Caco-2 (cell line): ENCODE measurements at regions of chr16 and their contacts with region 1.

Region 1: GRCh38 chr16:74774203-74775116 is at the start of gene FA2H:
- DNase-seq: peak; percentile 97 to 100
- H3K4me3 ChIP-seq: peak within 1 kb of the TSS; percentile 82
- H3K4me3 Mint-ChIP-seq: peak within 1 kb of the TSS; percentile 98
- H3K27ac Mint-ChIP-seq: peak within 1 kb of the TSS; percentile 84
- H3K4me1 ChIP-seq: peaks cover 7% of the 10 kb centered on the region; the same call in 1 of the 2 replicates
- H3K4me1 Mint-ChIP-seq: peaks cover 18% of the 10 kb centered on the region
- H3K27me3 ChIP-seq: no peaks in the 10 kb centered on the region
- H3K27me3 Mint-ChIP-seq: no peaks in the 10 kb centered on the region
- CTCF ChIP-seq: peak; percentile 38 to 65
- total RNA-seq, gene FA2H: 20.1 and 21.3 TPM in 2 replicates

Region 2: GRCh38 chr16:74695450-74696422 is 78.7 kb before region 1 on chr16:
- CTCF ChIA-PET with region 1: interaction called, 11 read pairs
- POLR2A ChIA-PET with region 1: no interaction called
- intact Hi-C with region 1: no loop called
- DNase-seq: peak; percentile 89 to 92
- H3K4me3 ChIP-seq: peak overlapping the region; percentile 36
- H3K4me3 Mint-ChIP-seq: peak overlapping the region; percentile 93
- H3K27ac Mint-ChIP-seq: peak overlapping the region; percentile 60
- H3K4me1 ChIP-seq: no peaks in the 10 kb centered on the region
- H3K4me1 Mint-ChIP-seq: peaks cover 15% of the 10 kb centered on the region
- H3K27me3 ChIP-seq: no peaks in the 10 kb centered on the region
- H3K27me3 Mint-ChIP-seq: no peaks in the 10 kb centered on the region
- CTCF ChIP-seq: no peak

Region 3: DNA sequence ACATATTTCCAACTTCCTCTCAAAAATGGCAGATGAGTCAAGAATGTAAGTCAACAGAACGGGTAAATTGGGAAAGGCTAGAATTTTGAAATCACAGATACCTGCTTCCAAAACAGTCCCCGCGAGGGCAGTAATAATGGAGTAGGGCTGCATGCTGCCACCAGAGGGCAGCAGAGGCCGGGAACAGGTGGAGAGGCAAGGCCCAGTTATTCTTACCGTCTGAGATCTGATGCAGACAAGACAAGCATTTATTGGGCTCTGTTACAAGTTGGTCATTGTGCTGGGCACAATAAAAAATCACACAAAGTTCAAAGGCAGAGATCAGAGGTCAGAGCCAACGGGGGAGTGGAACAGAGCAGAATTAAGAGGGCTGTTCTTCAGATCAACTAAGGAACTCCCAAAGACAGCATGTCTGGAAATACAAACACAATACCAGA is 65.0 kb before region 1 on chr16:
- CTCF ChIA-PET with region 1: interaction called, 4 read pairs
- POLR2A ChIA-PET with region 1: no interaction called
- intact Hi-C with region 1: loop called (anchors 1 kb)
- DNase-seq: peak; percentile 83 to 92
- H3K4me3 ChIP-seq: no peak overlapping the region
- H3K4me3 Mint-ChIP-seq: no peak overlapping the region
- H3K27ac Mint-ChIP-seq: no peak overlapping the region
- H3K4me1 ChIP-seq: no peaks in the 10 kb centered on the region
- H3K4me1 Mint-ChIP-seq: peaks cover 6% of the 10 kb centered on the region
- H3K27me3 ChIP-seq: no peaks in the 10 kb centered on the region
- H3K27me3 Mint-ChIP-seq: peaks cover 2% of the 10 kb centered on the region
- CTCF ChIP-seq: peak; percentile 95 to 99

Region 4: GRCh38 chr16:74813109-74813641 is 38.7 kb after region 1 on chr16:
- CTCF ChIA-PET with region 1: interaction called, 19 read pairs
- POLR2A ChIA-PET with region 1: no interaction called
- intact Hi-C with region 1: loop called (anchors 1 kb)
- DNase-seq: peak; percentile 94 to 97
- H3K4me3 ChIP-seq: no peak overlapping the region
- H3K4me3 Mint-ChIP-seq: peak overlapping the region; percentile 12
- H3K27ac Mint-ChIP-seq: no peak overlapping the region
- H3K4me1 ChIP-seq: peaks cover 51% of the 10 kb centered on the region
- H3K4me1 Mint-ChIP-seq: peaks cover 34% of the 10 kb centered on the region
- H3K27me3 ChIP-seq: no peaks in the 10 kb centered on the region
- H3K27me3 Mint-ChIP-seq: no peaks in the 10 kb centered on the region
- CTCF ChIP-seq: peak; percentile 99

Region 5: GRCh38 chr16:74825941-74826542 is 51.6 kb after region 1 on chr16:
- CTCF ChIA-PET with region 1: interaction called, 3 read pairs
- POLR2A ChIA-PET with region 1: no interaction called
- intact Hi-C with region 1: loop called (anchors 5 kb)
- DNase-seq: no peak
- H3K4me3 ChIP-seq: no peak overlapping the region
- H3K4me3 Mint-ChIP-seq: no peak overlapping the region
- H3K27ac Mint-ChIP-seq: no peak overlapping the region
- H3K4me1 ChIP-seq: peaks cover 16% of the 10 kb centered on the region
- H3K4me1 Mint-ChIP-seq: peaks cover 9% of the 10 kb centered on the region
- H3K27me3 ChIP-seq: no peaks in the 10 kb centered on the region
- H3K27me3 Mint-ChIP-seq: no peaks in the 10 kb centered on the region
- CTCF ChIP-seq: no peak

Region 6: GRCh38 chr16:75011634-75012307 is 237.3 kb after region 1 on chr16:
- CTCF ChIA-PET with region 1: no interaction called
- POLR2A ChIA-PET with region 1: no interaction called
- intact Hi-C with region 1: no loop called
- DNase-seq: no peak
- H3K4me3 ChIP-seq: no peak overlapping the region
- H3K4me3 Mint-ChIP-seq: no peak overlapping the region
- H3K27ac Mint-ChIP-seq: no peak overlapping the region
- H3K4me1 ChIP-seq: no peaks in the 10 kb centered on the region
- H3K4me1 Mint-ChIP-seq: peaks cover 20% of the 10 kb centered on the region
- H3K27me3 ChIP-seq: no peaks in the 10 kb centered on the region
- H3K27me3 Mint-ChIP-seq: no peaks in the 10 kb centered on the region
- CTCF ChIP-seq: no peak